ENCODE measurements at regions of chr11 and their contacts with region 1.

Region 1: GRCh38 chr11:86456052-86456939 is 81.6 kb downstream of the CCDC81 start:
- DNase-seq: peak; percentile 45
- ATAC-seq: peak; percentile 47
- H3K4me3 Mint-ChIP-seq: no peak overlapping the region
- H3K27ac Mint-ChIP-seq: no peak overlapping the region
- H3K4me1 Mint-ChIP-seq: peaks cover 2% of the 10 kb centered on the region
- H3K27me3 Mint-ChIP-seq: no peaks in the 10 kb centered on the region
- CTCF ChIP-seq: peak; percentile 65

Region 2: GRCh38 chr11:86370922-86371594 is 85.2 kb before region 1 on chr11:
- CTCF ChIA-PET with region 1: no interaction called
- POLR2A ChIA-PET with region 1: no interaction called
- intact Hi-C with region 1: no loop called
- DNase-seq: no peak
- ATAC-seq: no peak
- H3K4me3 Mint-ChIP-seq: no peak overlapping the region
- H3K27ac Mint-ChIP-seq: no peak overlapping the region
- H3K4me1 Mint-ChIP-seq: no peaks in the 10 kb centered on the region
- H3K27me3 Mint-ChIP-seq: peaks cover 6% of the 10 kb centered on the region
- CTCF ChIP-seq: no peak

Region 3: GRCh38 chr11:86395061-86395551 is 61.2 kb before region 1 on chr11:
- CTCF ChIA-PET with region 1: no interaction called
- POLR2A ChIA-PET with region 1: no interaction called
- intact Hi-C with region 1: no loop called
- DNase-seq: no peak
- ATAC-seq: no peak
- H3K4me3 Mint-ChIP-seq: no peak overlapping the region
- H3K27ac Mint-ChIP-seq: no peak overlapping the region
- H3K4me1 Mint-ChIP-seq: no peaks in the 10 kb centered on the region
- H3K27me3 Mint-ChIP-seq: no peaks in the 10 kb centered on the region
- CTCF ChIP-seq: no peak

Region 4: GRCh38 chr11:86608251-86608799 is 152.0 kb after region 1 on chr11:
- CTCF ChIA-PET with region 1: interaction called, 27 read pairs
- POLR2A ChIA-PET with region 1: no interaction called
- intact Hi-C with region 1: loop called (anchors 1 kb)
- DNase-seq: no peak
- ATAC-seq: peak; percentile 67
- H3K4me3 Mint-ChIP-seq: no peak overlapping the region
- H3K27ac Mint-ChIP-seq: no peak overlapping the region
- H3K4me1 Mint-ChIP-seq: no peaks in the 10 kb centered on the region
- H3K27me3 Mint-ChIP-seq: peaks cover 2% of the 10 kb centered on the region
- CTCF ChIP-seq: peak; percentile 94

Region 5: GRCh38 chr11:86802601-86803051 is 346.3 kb after region 1 on chr11:
- CTCF ChIA-PET with region 1: no interaction called
- POLR2A ChIA-PET with region 1: no interaction called
- intact Hi-C with region 1: loop called (anchors 5 kb)
- DNase-seq: no peak
- ATAC-seq: no peak
- H3K4me3 Mint-ChIP-seq: no peak overlapping the region
- H3K27ac Mint-ChIP-seq: no peak overlapping the region
- H3K4me1 Mint-ChIP-seq: peaks cover 9% of the 10 kb centered on the region
- H3K27me3 Mint-ChIP-seq: peaks cover 32% of the 10 kb centered on the region
- CTCF ChIP-seq: no peak

Region 6: GRCh38 chr11:86818466-86819192 is 362.3 kb after region 1 on chr11:
- CTCF ChIA-PET with region 1: interaction called, 9 read pairs
- POLR2A ChIA-PET with region 1: no interaction called
- intact Hi-C with region 1: loop called (anchors 1 kb)
- DNase-seq: no peak
- ATAC-seq: no peak
- H3K4me3 Mint-ChIP-seq: no peak overlapping the region
- H3K27ac Mint-ChIP-seq: no peak overlapping the region
- H3K4me1 Mint-ChIP-seq: no peaks in the 10 kb centered on the region
- H3K27me3 Mint-ChIP-seq: peaks cover 12% of the 10 kb centered on the region
- CTCF ChIP-seq: no peak

Region 7: GRCh38 chr11:86869966-86870570 is 413.8 kb after region 1 on chr11:
- CTCF ChIA-PET with region 1: no interaction called
- POLR2A ChIA-PET with region 1: no interaction called
- intact Hi-C with region 1: loop called (anchors 5 kb)
- DNase-seq: no peak
- ATAC-seq: peak; percentile 50
- H3K4me3 Mint-ChIP-seq: no peak overlapping the region
- H3K27ac Mint-ChIP-seq: no peak overlapping the region
- H3K4me1 Mint-ChIP-seq: no peaks in the 10 kb centered on the region
- H3K27me3 Mint-ChIP-seq: peaks cover 3% of the 10 kb centered on the region
- CTCF ChIP-seq: peak; percentile 23

Measured in activated B cell treated with CpG ODN at 0.5 μM for 24 hours (primary cell).